ENCODE measurements at regions of chr1 and their contacts with region 1.

Region 1: DNA sequence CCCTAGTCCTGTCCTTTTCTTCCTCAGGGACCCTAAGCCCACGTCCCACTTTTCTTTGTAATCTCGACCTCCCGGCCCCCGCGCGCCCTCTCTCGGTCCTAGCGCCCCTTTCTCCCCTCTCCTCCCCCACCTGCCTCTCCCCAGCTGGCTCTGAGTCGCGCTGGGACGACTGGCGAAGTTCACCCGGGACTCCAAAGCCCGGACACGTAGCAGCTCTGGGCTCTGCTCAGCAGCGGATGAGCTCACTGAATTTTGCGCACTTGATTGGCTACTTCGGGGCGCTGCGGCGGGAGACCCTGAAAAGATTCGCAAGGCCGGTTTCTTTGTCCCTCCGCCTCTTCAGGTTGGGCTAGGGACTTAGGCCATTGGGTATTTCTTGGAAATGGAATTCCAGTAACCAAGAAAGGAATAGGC is 16.3 kb upstream of the ACKR1 start:
- DNase-seq: peak; percentile 88 to 89
- H3K4me3 ChIP-seq: peak overlapping the region; percentile 57 to 81 (median 71)
- H3K27ac ChIP-seq: peak overlapping the region; percentile 58
- H3K4me1 ChIP-seq: peaks cover 0 to 3% (median under 1%) of the 10 kb centered on the region in 4 experiments; a peak in 3 of 7 replicates
- H3K27me3 ChIP-seq: no peaks in the 10 kb centered on the region
- CTCF ChIP-seq: no peak
- EP300 ChIP-seq: no peak; a peak in 1 of 3 replicates
- POLR2A ChIP-seq: peak in 1 of 2 experiments; percentile 59; a peak in 2 of 3 replicates
- RAD21 ChIP-seq: no peak

Region 2: GRCh38 chr1:159177273-159177907 is 11.0 kb before region 1 on chr1:
- CTCF ChIA-PET with region 1: interaction called, 10 read pairs
- POLR2A ChIA-PET with region 1: interaction called, 4 read pairs
- DNase-seq: peak in 1 of 2 experiments; percentile 74
- H3K4me3 ChIP-seq: no peak overlapping the region
- H3K27ac ChIP-seq: no peak overlapping the region
- H3K4me1 ChIP-seq: peaks cover 3 to 13% (median 3%) of the 10 kb centered on the region in 4 experiments; a peak in 6 of 7 replicates
- H3K27me3 ChIP-seq: no peaks in the 10 kb centered on the region
- CTCF ChIP-seq: no peak
- EP300 ChIP-seq: no peak
- POLR2A ChIP-seq: no peak
- RAD21 ChIP-seq: 0 out of 4 replicates have a peak, but pooled peaks of 1 of the 2 experiments have one; percentile 4

Region 3: GRCh38 chr1:159587461-159587951 is 399.1 kb after region 1 on chr1 and contains the start of gene APCS:
- CTCF ChIA-PET with region 1: no interaction called
- POLR2A ChIA-PET with region 1: no interaction called
- DNase-seq: no peak
- H3K4me3 ChIP-seq: no peak within 1 kb of the TSS
- H3K27ac ChIP-seq: no peak within 1 kb of the TSS
- H3K4me1 ChIP-seq: no peaks in the 10 kb centered on the region
- H3K27me3 ChIP-seq: no peaks in the 10 kb centered on the region
- CTCF ChIP-seq: no peak
- EP300 ChIP-seq: no peak
- POLR2A ChIP-seq: no peak
- RAD21 ChIP-seq: no peak
- total RNA-seq, gene APCS: not detected in 2 replicates